HEK293 (cell line): ENCODE measurements at regions of chr19 and their contacts with region 1.

Region 1: DNA sequence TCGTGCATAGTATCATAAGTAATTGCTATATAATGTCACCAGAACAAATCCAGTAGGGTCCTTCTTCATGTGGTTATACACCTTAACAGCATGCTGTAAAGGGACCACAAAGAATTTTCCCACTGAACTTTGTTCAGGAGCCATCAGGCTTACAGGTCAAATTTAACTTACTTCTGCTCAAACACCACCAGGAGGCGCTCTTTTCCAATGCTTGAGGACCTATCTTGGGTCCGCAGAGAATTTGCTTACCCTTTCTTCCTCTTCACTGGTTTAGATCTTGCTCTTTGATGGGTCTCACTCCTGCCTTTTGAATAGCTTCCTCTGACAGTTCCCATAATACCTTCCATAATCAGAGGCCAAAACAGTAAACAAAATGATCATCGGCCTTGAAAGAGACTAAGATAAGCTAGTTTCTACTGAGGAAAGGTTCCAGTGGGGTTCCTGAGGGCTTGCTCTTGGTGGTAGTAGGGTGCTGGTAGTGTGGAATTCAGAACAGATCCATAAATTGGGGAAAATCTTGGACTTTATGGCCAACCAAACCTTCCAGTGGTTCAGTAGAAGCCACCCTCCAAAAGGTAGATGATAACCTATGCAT is 37.4 kb downstream of the SCGB2B2 start:
- H3K4me3 ChIP-seq: no peak overlapping the region
- H3K27ac ChIP-seq: no peak overlapping the region
- H3K4me1 ChIP-seq: no peaks in the 10 kb centered on the region
- CTCF ChIP-seq: peak; percentile 92

Region 2: DNA sequence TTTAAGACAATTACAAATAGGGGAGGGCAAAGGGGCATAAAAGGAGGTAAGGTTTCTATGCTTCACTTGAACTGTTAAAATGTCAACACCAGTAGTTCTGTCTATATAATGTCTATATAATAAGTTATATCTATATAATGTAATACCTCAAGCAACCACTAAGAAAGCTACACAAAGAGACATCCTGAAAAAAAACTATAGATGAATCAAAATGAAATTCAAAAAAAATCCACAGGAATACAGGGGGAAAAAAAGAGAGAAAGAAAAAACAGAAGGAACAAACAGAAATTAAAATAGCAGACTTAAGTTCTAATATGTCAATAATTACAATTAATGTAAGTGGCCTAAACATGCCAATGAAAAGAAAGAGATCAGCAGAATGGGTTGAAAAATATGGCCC is 656.9 kb before region 1 on chr19:
- CTCF ChIA-PET with region 1: interaction called, 12 read pairs
- POLR2A ChIA-PET with region 1: no interaction called
- H3K4me3 ChIP-seq: no peak overlapping the region
- H3K27ac ChIP-seq: no peak overlapping the region
- H3K4me1 ChIP-seq: no peaks in the 10 kb centered on the region
- CTCF ChIP-seq: no peak

Region 3: DNA sequence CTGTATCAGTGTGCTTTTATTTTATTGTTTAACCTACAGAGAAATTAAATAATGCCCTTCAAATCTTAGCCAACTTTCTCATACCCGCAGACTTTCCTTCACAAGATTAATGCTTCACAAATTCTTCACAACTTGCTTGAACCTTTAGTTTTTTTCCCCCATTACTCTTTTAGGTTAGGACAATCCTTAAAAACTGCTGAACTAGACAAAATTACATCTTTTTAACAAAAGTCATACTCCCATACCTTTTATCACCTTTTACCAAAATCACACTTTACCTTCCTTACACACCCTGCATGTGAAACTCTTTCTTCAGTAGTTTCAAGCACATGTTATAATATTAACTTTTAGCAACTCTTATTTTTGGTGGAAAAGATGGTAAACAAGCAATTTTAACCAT is 21.2 kb before region 1 on chr19:
- CTCF ChIA-PET with region 1: interaction called, 30 read pairs
- POLR2A ChIA-PET with region 1: no interaction called
- H3K4me3 ChIP-seq: no peak overlapping the region
- H3K27ac ChIP-seq: no peak overlapping the region
- H3K4me1 ChIP-seq: no peaks in the 10 kb centered on the region
- CTCF ChIP-seq: no peak

Region 4: DNA sequence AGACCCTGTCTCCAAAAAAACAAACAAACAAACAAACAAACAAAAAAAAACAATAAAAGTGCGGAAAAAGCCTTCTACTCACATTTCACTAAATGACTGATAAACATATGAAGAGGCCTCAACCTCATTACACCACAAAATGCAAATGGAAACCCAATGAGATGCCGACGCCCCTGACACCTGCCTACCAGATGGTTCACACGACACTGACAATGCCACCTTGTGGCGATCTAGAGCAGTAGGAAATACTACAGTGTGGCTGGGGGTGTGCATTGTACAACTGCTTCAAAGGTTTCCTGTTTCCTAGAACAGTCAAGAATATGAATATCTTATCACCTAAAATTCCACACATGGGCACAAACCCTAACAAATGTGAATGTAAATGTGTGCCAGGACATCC is 23.3 kb after region 1 on chr19:
- CTCF ChIA-PET with region 1: interaction called, 64 read pairs
- POLR2A ChIA-PET with region 1: no interaction called
- H3K4me3 ChIP-seq: no peak overlapping the region
- H3K27ac ChIP-seq: no peak overlapping the region
- H3K4me1 ChIP-seq: no peaks in the 10 kb centered on the region; the same call in 1 of the 2 replicates
- CTCF ChIP-seq: peak; percentile 47; the same call in 1 of the 2 replicates

Region 5: GRCh38 chr19:34687348-34687747 is 47.8 kb after region 1 on chr19:
- CTCF ChIA-PET with region 1: interaction called, 16 read pairs
- POLR2A ChIA-PET with region 1: no interaction called
- H3K4me3 ChIP-seq: no peak overlapping the region
- H3K27ac ChIP-seq: no peak overlapping the region
- H3K4me1 ChIP-seq: no peaks in the 10 kb centered on the region
- CTCF ChIP-seq: no peak

Region 6: DNA sequence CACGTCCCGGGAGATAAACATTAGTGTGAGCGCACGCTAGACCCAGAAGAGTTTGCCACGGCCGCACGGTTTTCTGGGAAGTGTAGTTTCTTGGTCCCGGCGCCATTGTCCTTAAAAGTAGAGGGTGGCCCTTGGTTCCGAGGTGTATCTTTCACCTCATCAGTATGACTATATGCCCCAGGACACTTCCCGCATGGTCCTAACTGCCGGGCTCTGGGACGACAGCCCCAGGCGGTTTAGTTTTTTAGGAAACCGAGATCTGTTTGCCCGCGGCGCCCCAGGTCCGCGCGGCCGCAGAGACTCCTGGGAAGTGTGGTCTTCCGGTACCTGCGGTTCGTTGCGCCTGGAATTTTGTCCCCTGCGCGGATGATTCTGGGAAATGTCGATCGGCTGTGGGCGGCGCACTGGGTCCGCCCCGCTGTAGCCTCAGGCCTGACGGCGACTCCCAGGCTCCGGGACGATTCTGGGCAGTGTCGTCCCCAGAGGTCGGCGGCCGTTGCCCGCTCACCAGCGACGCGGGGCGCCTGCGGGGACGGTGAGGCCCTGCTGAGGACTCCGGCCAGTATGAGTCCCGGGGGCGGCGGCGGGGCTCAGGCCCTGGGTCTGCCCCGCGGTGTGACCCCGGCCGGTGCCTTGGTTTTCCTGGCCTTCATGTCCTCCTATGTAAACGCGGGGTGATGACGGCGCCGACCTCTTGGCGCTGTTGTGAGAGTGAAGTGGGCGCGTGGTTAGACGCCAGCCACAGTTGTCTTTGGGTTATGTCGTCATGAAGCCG is 94.4 kb after region 1 on chr19 and contains the start of gene ZNF181:
- CTCF ChIA-PET with region 1: interaction called, 14 read pairs
- POLR2A ChIA-PET with region 1: no interaction called
- H3K4me3 ChIP-seq: peak within 1 kb of the TSS; percentile 68
- H3K27ac ChIP-seq: peak within 1 kb of the TSS; percentile 96
- H3K4me1 ChIP-seq: peaks cover 14% of the 10 kb centered on the region
- CTCF ChIP-seq: peak; percentile 95